AG04450 (cell line): ENCODE measurements at regions of chr10 and their contacts with region 1.

Region 1: DNA sequence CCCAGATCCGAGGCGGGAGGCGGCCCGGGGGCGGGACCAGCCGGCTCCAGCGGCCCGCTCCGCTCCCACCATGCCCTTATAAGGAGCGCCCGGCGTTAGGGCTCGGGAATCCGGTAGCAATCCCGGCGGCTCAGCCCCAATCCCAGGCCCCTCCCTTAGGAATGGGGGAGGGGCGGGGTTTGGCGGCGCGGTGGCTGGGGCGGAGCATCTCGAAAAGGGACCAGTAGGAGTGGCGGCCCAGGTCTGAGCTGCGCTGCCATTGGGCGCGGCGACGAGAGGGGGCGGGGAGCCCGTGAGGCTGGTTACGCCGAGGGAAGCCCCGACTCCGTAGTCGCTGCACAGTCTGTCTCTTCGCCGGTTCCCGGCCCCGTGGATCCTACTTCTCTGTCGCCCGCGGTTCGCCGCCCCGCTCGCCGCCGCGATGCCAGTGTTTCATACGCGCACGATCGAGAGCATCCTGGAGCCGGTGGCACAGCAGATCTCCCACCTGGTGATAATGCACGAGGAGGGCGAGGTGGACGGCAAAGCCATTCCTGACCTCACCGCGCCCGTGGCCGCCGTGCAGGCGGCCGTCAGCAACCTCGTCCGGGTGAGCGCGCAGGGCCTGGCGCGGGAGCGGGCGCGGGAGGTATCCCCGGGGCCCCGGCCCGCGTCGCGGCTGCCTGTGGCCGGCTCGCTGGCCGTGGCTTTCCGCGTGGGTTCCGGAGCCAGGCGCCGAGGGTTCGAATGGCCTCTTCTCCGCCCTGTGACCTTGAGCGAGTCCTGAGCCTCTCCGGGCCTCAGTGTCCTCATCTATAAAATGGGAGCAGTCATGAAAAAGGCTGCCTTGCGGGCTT is at the start of gene VCL:
- DNase-seq: peak; percentile 96
- H3K4me3 ChIP-seq: peak within 1 kb of the TSS; percentile 94
- H3K27ac ChIP-seq: peak within 1 kb of the TSS; percentile 90
- H3K27me3 ChIP-seq: no peaks in the 10 kb centered on the region
- CTCF ChIP-seq: no peak
- polyA plus RNA-seq, gene VCL: 313 and 327 TPM in 2 replicates

Region 2: DNA sequence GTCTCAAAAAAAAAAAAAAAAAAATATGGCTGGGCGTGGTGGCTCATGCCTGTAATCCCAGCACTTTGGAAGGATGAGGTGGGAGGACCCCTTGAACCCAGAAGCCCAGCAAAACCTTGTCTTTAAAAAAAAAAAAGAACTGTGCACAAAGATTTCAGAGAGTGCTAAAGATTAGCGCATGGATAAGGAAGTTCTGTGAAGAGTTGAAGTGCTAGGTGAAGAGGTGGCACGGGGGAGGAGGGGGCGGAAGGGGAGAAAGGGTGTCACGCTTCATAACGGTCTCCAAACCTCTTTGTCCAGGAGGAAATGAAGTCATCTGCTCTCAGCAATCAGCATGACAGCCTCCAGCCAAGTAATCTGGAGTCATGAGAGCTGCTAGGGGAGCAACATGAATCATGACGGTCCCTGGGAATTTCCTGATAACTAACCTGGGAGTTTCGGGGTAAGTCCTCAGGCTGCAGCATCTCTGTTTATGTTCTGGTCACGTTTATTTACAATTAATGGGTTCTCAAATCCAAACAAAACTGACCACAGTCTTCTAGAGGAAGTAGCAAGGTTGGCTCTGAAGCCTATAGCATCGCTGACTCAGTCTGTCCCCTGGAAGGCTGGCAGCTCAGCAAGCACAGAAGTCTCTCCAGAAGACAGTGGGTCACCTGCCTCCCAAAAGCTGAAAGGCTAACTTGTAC is 89.0 kb before region 1 on chr10:
- CTCF ChIA-PET with region 1: no interaction called
- POLR2A ChIA-PET with region 1: interaction called, 19 read pairs
- DNase-seq: peak; percentile 99
- H3K4me3 ChIP-seq: peak overlapping the region; percentile 35; the same call in 1 of the 2 replicates
- H3K27ac ChIP-seq: peak overlapping the region; percentile 100
- H3K27me3 ChIP-seq: no peaks in the 10 kb centered on the region
- CTCF ChIP-seq: no peak

Region 3: DNA sequence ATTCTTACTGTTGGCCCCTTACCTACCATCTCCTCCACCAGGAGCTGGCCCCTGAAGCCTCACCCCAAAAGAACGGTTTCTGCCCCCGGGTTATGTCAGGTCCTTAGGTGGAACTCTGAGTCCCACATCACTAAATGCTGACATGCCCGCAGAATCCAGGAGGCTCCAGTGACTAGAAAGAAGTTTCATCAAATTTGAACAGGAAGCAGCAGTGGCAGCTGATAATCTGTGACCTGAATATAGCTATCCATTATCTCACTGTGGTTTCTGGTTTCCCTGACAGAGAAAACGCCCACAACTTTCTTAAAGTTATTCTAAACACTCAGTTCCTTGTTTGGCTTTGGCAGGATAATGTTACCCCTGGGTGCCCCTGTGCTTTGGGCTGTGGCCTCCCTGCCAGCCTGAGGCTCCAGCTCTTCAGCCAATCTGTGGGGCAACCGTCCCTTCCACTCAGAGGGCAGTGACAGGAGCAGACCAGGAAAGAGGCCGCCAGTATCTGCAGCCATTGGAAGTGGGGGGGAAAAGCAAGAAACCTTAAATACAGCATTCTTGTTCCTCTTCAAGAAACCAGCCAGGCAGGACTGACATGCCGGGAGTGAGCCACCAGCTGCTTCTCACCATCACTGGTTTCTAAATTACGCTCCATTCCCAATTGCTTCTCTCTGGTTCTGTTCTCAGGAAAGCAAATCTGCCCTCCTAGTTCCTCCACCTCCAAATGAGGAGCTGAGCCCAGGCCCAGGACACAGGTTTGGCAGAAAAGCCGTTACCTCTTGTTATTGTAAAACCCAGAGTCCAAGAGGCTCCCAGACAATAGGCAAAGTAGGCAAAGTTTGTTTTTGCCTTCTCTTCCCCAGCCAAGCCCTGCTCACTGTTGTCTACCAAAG is 41.3 kb before region 1 on chr10:
- CTCF ChIA-PET with region 1: no interaction called
- POLR2A ChIA-PET with region 1: interaction called, 12 read pairs
- DNase-seq: no peak
- H3K4me3 ChIP-seq: no peak overlapping the region
- H3K27ac ChIP-seq: peak overlapping the region; percentile 54
- H3K27me3 ChIP-seq: no peaks in the 10 kb centered on the region
- CTCF ChIP-seq: no peak

Region 4: GRCh38 chr10:73965890-73966768 is 31.9 kb before region 1 on chr10:
- CTCF ChIA-PET with region 1: interaction called, 5 read pairs
- POLR2A ChIA-PET with region 1: interaction called, 20 read pairs
- DNase-seq: peak; percentile 98
- H3K4me3 ChIP-seq: peak overlapping the region; percentile 5
- H3K27ac ChIP-seq: peak overlapping the region; percentile 97
- H3K27me3 ChIP-seq: no peaks in the 10 kb centered on the region
- CTCF ChIP-seq: no peak

Region 5: DNA sequence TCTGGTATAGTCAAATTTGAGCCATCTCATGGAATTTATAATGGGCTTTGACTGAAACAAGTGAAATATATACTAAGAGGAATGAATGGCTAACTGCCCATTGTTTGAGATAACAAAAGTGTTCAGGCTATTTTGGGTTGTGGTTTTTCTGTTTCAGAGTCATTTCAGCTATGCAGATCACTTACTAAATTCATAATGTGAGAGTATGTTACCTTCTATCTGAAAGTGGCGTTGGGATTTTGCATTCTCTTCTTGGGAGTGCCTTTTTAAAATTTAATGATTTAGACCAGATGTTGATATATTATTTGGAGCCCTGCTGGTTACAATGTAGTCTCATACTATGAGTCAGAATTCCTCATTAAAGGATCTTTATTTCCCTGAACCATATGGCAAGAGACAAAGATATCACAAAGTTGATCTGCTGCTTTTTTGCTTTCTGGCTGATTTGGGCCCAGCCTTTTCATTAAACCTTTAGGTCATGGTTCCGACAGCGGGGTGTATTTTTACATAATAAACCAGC is 10.3 kb after region 1 on chr10:
- CTCF ChIA-PET with region 1: interaction called, 7 read pairs
- POLR2A ChIA-PET with region 1: interaction called, 12 read pairs
- DNase-seq: peak; percentile 54
- H3K4me3 ChIP-seq: peak overlapping the region; percentile 8; the same call in 1 of the 2 replicates
- H3K27ac ChIP-seq: peak overlapping the region; percentile 77
- H3K27me3 ChIP-seq: no peaks in the 10 kb centered on the region
- CTCF ChIP-seq: no peak

Region 6: DNA sequence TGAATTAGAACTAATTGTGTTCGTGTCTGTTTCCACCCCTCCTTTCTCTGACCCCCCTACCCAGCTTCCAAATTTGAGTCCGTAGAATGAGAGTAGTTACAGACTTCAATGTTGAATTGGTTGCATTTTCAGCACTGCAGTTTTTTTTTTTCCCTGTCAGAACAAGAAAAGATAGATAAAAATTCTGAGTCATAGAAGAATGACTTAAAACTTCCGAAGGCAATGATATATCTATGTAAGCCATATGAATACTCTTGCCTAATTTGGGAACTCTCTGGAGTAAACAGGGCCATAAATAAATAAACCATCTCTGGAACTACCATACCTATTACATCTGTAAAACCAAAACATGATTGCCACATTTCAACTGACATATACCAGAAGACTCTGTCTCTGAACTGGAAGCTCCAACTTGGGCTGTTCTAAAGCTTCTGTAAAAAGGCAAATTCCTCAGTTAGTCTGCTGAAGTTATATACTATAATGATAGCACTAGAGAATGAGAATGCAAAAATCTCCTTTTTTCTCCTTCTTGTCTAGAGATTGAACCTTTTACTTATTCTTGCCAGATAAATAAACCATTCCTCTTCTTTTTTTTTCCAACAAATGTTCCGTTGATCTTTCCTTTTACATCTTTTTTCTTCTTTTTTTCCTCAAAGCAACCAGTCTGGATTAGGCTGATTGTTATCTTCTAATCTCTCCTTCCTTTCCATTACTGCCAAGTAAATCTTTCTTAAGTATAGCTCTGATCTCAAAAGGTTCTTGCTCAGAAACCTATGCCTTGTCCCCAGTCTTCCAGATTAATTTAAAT is 23.4 kb after region 1 on chr10:
- CTCF ChIA-PET with region 1: interaction called, 7 read pairs
- POLR2A ChIA-PET with region 1: interaction called, 31 read pairs
- DNase-seq: peak; percentile 74
- H3K4me3 ChIP-seq: peak overlapping the region; percentile 23; the same call in 1 of the 2 replicates
- H3K27ac ChIP-seq: peak overlapping the region; percentile 81
- H3K27me3 ChIP-seq: no peaks in the 10 kb centered on the region
- CTCF ChIP-seq: no peak

Region 7: GRCh38 chr10:74081192-74081803 is 83.3 kb after region 1 on chr10:
- CTCF ChIA-PET with region 1: interaction called, 17 read pairs
- POLR2A ChIA-PET with region 1: interaction called, 5 read pairs
- DNase-seq: no peak
- H3K4me3 ChIP-seq: no peak overlapping the region
- H3K27ac ChIP-seq: no peak overlapping the region
- H3K27me3 ChIP-seq: no peaks in the 10 kb centered on the region
- CTCF ChIP-seq: peak; percentile 88